Panc1 (cell line): ENCODE measurements at regions of chr7 and their contacts with region 1.

Region 1: GRCh38 chr7:2523941-2524807 is 4.6 kb downstream of the LFNG start:
- DNase-seq: no peak
- ATAC-seq: peak; percentile 19
- H3K4me3 ChIP-seq: peak overlapping the region; percentile 17 to 89
- H3K27ac ChIP-seq: peak overlapping the region; percentile 83
- H3K4me1 ChIP-seq: peaks cover 77% of the 10 kb centered on the region
- H3K27me3 ChIP-seq: no peaks in the 10 kb centered on the region
- CTCF ChIP-seq: no peak

Region 2: DNA sequence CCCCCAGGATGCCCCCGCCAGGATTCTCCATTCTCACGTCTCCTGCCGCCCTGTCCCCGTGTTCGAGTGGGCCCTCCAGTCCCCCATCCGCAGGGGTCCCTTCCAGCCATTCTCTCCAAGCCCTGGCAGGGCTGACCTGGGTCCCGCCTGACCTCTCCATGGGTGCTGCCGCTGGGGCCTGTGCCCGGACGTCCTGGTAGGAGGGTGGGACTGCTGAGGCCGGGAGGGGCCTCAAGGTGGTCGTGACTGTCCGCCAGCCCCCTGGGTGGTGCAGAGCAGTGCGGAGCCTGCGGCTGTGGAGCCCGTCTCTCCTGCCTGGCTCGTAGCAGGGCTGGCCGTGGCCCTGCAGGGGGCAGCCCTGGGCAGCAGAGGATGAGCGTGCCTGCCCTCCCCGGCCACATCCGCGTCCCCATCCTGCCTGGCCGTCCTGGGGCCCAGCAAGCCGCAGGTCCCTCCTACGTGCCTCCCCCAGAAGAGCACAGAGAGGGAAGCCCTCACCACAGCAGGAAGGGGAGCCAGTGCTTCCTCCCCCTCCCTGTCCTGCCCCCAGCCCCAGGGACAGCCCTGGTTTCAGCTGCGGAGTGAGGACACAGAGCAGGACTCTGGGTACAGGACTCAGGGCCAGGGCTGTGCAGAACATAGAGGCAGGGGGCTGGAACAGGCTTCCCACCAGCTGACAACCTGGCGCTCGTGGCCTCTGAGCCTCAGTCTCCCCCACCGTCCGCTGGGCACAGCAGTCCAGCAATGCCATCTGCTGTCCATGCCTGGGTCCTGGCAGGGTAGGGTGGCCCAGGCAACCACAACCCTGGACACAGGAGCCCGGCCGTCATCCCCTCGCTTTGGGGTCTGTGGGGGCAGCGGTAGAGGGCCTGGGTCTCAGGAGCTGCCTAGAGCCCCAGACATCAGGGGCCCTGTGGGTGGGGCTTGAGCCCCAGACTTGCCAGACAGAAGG is 46.5 kb before region 1 on chr7:
- CTCF ChIA-PET with region 1: interaction called, 3 read pairs
- POLR2A ChIA-PET with region 1: no interaction called
- in situ Hi-C with region 1: no loop called
- intact Hi-C with region 1: loop called (anchors 5 kb)
- DNase-seq: no peak
- ATAC-seq: peak; percentile 92
- H3K4me3 ChIP-seq: no peak overlapping the region
- H3K27ac ChIP-seq: peak overlapping the region; percentile 66; the same call in 1 of the 2 replicates
- H3K4me1 ChIP-seq: peaks cover 18% of the 10 kb centered on the region
- H3K27me3 ChIP-seq: no peaks in the 10 kb centered on the region
- CTCF ChIP-seq: peak; percentile 99

Region 3: DNA sequence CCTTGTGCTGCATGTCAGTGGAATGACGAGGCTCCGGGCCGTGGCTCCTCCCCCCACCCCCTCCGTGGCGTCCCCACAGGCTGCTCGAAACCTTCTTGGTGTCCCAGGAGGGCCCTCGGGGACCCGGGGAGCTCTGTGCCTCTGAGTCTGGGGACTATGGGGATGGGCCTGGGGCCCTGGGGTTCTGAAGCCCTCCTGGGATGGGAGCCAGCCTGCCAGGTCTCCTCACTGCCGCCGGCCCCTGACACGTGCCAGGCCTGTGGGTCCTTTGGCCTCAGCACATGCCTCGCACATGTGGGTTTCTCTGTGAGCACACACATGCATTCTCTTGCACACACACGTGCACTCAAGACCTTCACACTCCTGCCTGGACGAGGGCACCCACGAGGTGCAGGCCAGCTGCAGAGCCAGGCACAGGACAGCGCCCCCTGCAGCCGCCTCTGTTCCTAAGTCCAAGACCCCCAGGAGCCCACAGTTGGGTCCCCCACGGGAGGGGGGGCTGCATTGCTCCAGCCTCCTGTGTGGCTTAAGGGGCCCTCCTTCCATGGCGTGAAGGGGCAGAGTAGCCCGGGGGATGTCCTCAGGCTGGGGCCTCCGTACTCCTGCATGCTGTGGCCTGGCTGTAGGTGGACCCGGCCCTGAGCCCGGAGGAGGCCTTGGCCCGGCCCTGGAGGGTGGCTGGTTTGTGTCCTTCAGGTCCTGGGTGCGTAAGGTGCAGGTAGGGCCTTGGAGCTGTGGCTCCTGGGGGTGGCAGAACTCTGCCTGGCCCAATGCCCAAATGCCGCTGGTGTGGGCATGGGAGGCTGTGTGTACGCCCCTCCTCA is 136.6 kb after region 1 on chr7:
- CTCF ChIA-PET with region 1: interaction called, 11 read pairs
- POLR2A ChIA-PET with region 1: interaction called, 3 read pairs
- in situ Hi-C with region 1: no loop called
- intact Hi-C with region 1: no loop called
- DNase-seq: no peak
- ATAC-seq: peak; percentile 10; the same call in 1 of the 2 replicates
- H3K4me3 ChIP-seq: no peak overlapping the region
- H3K27ac ChIP-seq: no peak overlapping the region
- H3K4me1 ChIP-seq: peaks cover 23% of the 10 kb centered on the region
- H3K27me3 ChIP-seq: no peaks in the 10 kb centered on the region
- CTCF ChIP-seq: peak; percentile 85